CD8-positive, alpha-beta memory T cell (primary cell): ENCODE measurements at regions of chr5 and their contacts with region 1.

Region 1: GRCh38 chr5:168219515-168220410 is 71.7 kb upstream of the WWC1 start:
- DNase-seq: peak in 2 of 5 donors; percentile 25 to 31
- H3K4me3 ChIP-seq: no peak overlapping the region
- H3K4me3 Mint-ChIP-seq: peak overlapping the region in 3 of 7 donors; percentile 27 to 60 (median 36)
- H3K27ac ChIP-seq: no peak overlapping the region
- H3K27ac Mint-ChIP-seq: no peak overlapping the region
- H3K4me1 ChIP-seq: no peaks in the 10 kb centered on the region
- H3K4me1 Mint-ChIP-seq: peaks cover 0 to 10% (median 4%) of the 10 kb centered on the region in 3 donors
- H3K27me3 ChIP-seq: no peaks in the 10 kb centered on the region
- H3K27me3 Mint-ChIP-seq: peaks cover 3 to 14% of the 10 kb centered on the region in 2 donors

Region 2: DNA sequence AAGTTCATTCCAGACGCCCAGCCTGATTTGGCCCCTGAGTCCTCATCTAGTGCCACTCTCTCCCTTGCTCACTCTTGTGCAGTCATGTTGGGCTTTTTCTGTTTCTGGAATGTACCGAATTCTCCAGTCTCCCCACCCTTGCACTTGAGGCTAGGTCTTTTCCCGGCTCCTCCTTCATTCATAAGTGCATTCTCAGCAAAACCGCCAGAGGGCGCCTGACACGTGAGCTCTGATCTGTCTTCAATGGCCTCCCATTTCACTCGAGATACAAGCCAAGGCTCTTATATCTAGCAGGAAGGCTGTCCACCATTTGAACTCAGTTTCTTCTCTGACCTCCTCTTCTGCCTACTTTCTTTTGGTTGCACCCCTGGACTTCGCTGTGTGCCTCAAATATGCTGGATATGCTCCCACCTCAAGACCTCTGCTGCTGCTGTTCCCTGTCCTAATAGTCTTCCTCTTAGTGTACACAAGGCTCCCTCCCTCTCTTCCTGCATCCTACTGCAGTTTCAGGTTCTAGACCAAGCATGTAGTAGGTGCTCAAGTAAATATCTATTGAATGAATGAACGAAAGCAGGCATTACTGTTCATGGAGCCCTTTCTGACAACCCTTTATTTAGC is 496.4 kb before region 1 on chr5:
- CTCF ChIA-PET with region 1: interaction called, 8 read pairs
- POLR2A ChIA-PET with region 1: interaction called, 10 read pairs
- DNase-seq: peak; percentile 8 to 55 (median 32)
- H3K4me3 ChIP-seq: no peak overlapping the region
- H3K4me3 Mint-ChIP-seq: no peak overlapping the region
- H3K27ac ChIP-seq: no peak overlapping the region
- H3K27ac Mint-ChIP-seq: peak overlapping the region in 1 of 8 donors; percentile 65
- H3K4me1 ChIP-seq: no peaks in the 10 kb centered on the region
- H3K4me1 Mint-ChIP-seq: peaks cover 5 to 7% (median 5%) of the 10 kb centered on the region in 3 donors
- H3K27me3 ChIP-seq: no peaks in the 10 kb centered on the region
- H3K27me3 Mint-ChIP-seq: no peaks in the 10 kb centered on the region

Region 3: DNA sequence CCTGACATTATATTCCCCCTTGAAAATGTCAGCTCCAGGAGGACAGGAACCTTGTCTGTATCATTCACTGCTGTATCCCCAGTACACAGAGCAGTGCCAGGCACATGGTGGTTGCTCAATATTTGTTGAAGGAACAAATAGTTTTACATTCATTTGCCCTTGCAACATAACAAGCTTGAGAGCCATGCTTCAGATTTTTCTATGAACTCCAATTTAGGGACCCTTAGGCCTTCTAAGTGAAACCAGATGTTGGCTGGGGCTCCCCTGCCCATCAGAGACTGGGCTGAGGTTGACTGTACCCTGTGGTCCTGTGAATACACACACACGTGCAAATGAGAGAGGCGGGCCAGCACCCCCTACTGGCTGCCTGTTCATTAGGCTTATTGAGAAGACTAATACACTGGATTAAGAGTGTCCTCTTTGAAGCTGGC is 143.2 kb before region 1 on chr5:
- CTCF ChIA-PET with region 1: no interaction called
- POLR2A ChIA-PET with region 1: no interaction called
- DNase-seq: no peak
- H3K4me3 ChIP-seq: no peak overlapping the region
- H3K4me3 Mint-ChIP-seq: no peak overlapping the region
- H3K27ac ChIP-seq: no peak overlapping the region
- H3K27ac Mint-ChIP-seq: no peak overlapping the region
- H3K4me1 ChIP-seq: no peaks in the 10 kb centered on the region
- H3K4me1 Mint-ChIP-seq: no peaks in the 10 kb centered on the region
- H3K27me3 ChIP-seq: no peaks in the 10 kb centered on the region
- H3K27me3 Mint-ChIP-seq: peaks cover 0 to 1% of the 10 kb centered on the region in 2 donors